ENCODE measurements at regions of chr2 and their contacts with region 1.

Region 1: DNA sequence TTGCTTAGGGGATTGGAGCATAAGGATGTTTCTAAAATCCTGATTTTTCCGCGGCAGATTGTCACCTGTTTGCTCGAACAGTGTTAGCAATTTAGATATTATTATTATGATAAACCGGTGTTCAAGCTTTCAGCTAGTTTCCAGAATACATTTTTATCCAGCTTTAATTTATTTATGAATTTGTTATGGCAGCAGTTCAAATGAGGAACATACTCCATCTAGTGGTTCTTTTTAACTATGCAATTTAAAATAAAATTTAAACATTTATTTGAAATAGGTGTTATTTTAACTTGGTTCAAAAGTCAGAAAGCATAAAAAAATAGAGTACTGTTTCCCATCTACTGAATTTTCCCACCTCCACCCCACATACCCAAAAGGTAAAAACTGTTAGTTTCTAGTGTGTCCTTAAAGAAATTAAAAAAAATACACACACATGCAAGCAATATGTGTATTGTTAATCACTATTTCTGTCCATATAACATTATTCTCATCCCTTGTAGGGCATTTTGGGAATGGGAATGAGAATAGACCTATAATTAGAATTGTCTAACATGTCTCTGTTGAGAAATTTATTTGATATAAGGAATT is 23.2 kb downstream of the ACOXL start:
- H3K4me3 Mint-ChIP-seq: no peak overlapping the region
- H3K27ac Mint-ChIP-seq: no peak overlapping the region
- H3K4me1 Mint-ChIP-seq: no peaks in the 10 kb centered on the region
- H3K27me3 Mint-ChIP-seq: peaks cover 17% of the 10 kb centered on the region

Region 2: GRCh38 chr2:110677530-110678456 is 77.8 kb before region 1 on chr2 and contains the start of gene BUB1:
- intact Hi-C with region 1: loop called (anchors 10 kb)
- H3K4me3 Mint-ChIP-seq: peak within 1 kb of the TSS; percentile 88
- H3K27ac Mint-ChIP-seq: peak within 1 kb of the TSS; percentile 89
- H3K4me1 Mint-ChIP-seq: peaks cover 29% of the 10 kb centered on the region
- H3K27me3 Mint-ChIP-seq: no peaks in the 10 kb centered on the region